Activated T-helper 2 cell treated with anti-CD3 and anti-CD28 coated beads, Interferon-gamma antibody, Interleukin-2, Interleukin-4, amounts not matched to agents 10 μg/mL and 5 μg/mL and 100 μg/mL, durations not matched to agents 14 hours and 24 hours and 36 hours (primary cell): ENCODE measurements at regions of chr20 and their contacts with region 1.

Region 1: GRCh38 chr20:54219751-54220426 is 12.0 kb downstream of the PFDN4 start:
- DNase-seq: no peak
- H3K4me3 Mint-ChIP-seq: no peak overlapping the region
- H3K27ac Mint-ChIP-seq: no peak overlapping the region
- H3K4me1 Mint-ChIP-seq: peaks cover 16% of the 10 kb centered on the region
- H3K27me3 Mint-ChIP-seq: no peaks in the 10 kb centered on the region

Region 2: DNA sequence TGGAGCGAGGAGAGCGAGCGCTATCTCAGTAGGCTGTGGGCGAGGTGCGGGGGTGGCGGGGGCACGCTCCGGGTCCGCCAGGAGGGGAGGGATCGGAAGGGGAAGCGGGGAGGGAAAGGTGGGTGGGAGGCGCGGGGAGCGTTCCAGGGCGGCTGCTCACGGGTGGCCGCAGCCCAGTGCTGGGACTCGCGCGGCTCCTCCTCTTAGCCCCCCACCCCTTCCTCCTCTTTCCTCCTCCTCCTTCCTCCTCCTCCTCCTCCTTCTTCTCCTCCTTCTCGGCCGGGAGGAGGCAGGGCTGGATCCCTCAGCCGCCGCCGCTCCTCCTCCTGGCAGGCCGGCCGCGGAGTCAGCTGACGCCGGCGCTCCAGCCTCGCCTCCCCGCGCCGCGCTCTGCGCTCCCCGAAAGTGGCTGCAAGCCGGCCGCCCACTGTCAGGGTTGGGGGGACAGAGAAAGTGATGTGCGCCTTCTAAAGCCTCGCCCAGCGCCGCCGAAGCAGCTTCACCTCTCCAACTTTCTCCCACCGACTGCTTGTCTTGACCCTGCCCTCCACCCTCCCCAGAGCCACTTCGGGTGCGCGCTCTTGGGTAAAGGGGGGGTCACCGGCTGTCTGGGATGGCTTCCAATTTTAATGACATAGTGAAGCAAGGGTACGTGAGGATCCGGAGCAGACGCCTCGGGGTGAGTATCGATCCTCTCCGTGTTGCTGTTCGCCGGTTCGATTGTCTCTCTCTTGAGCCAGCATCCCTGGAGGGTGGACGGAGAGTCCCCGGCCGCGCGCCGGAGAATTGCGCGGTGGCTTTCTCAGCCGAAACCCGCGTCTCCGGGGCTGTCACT is 255.7 kb after region 1 on chr20 and contains the start of gene DOK5:
- intact Hi-C with region 1: loop called (anchors 10 kb)
- DNase-seq: no peak
- H3K4me3 Mint-ChIP-seq: peak within 1 kb of the TSS; percentile 65
- H3K27ac Mint-ChIP-seq: peak within 1 kb of the TSS; percentile 18
- H3K4me1 Mint-ChIP-seq: peaks cover 17% of the 10 kb centered on the region
- H3K27me3 Mint-ChIP-seq: peaks cover 41% of the 10 kb centered on the region
- total RNA-seq, gene DOK5: 2.9 and 4.7 TPM in 2 replicates